Thyroid gland (tissue), 4 donors: ENCODE measurements at regions of chr2 and their contacts with region 1.

Region 1: DNA sequence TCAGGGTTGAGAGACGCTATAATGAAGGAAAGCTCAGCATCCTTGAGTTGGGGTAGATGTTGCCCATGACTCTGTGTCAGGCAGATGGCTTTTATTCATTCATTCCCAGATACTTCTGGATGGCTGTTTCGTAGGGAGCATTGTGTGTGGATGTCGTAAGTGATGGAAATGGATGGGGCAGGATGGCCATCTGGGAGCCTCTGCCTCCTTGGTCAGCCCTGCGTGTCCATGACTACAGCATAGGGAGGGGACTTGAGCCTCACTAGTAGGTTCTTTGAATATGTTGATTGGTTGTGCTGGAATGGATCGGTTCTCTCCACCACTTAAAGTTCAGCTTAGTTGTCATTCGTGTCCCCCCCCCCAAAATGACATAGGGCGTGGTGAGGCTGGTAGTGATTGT is 44.9 kb downstream of the TGOLN2 start:
- DNase-seq: no peak
- H3K4me3 ChIP-seq: no peak overlapping the region
- H3K27ac ChIP-seq: no peak overlapping the region
- H3K4me1 ChIP-seq: peaks cover 12 to 15% of the 10 kb centered on the region in 2 donors
- H3K27me3 ChIP-seq: no peaks in the 10 kb centered on the region
- CTCF ChIP-seq: no peak
- POLR2A ChIP-seq: no peak

Region 2: GRCh38 chr2:85132834-85133637 is 149.9 kb before region 1 on chr2 and contains the start of gene TCF7L1:
- intact Hi-C with region 1: loop called (anchors 5 kb)
- DNase-seq: peak; percentile 92 to 93
- H3K4me3 ChIP-seq: peak within 1 kb of the TSS; percentile 35 to 88 (median 86)
- H3K27ac ChIP-seq: peak within 1 kb of the TSS; percentile 80 to 91 (median 87)
- H3K4me1 ChIP-seq: peaks cover 39 to 42% of the 10 kb centered on the region in 2 donors
- H3K27me3 ChIP-seq: no peaks in the 10 kb centered on the region
- CTCF ChIP-seq: peak; percentile 85 to 95 (median 91)
- POLR2A ChIP-seq: peak; percentile 63 to 82
- total RNA-seq, gene TCF7L1: 3.1 to 12.1 (median 8.7) TPM